Aorta (tissue), 5 donors: ENCODE measurements at regions of chr20 and their contacts with region 1.

Region 1: GRCh38 chr20:32652739-32653526 is 20.8 kb downstream of the C20orf203 start:
- DNase-seq: peak; percentile 88 to 94
- ATAC-seq: peak; percentile 95
- H3K4me3 ChIP-seq: no peak overlapping the region
- H3K27ac ChIP-seq: no peak overlapping the region
- H3K4me1 ChIP-seq: no peaks in the 10 kb centered on the region
- H3K27me3 ChIP-seq: no peaks in the 10 kb centered on the region

Region 2: DNA sequence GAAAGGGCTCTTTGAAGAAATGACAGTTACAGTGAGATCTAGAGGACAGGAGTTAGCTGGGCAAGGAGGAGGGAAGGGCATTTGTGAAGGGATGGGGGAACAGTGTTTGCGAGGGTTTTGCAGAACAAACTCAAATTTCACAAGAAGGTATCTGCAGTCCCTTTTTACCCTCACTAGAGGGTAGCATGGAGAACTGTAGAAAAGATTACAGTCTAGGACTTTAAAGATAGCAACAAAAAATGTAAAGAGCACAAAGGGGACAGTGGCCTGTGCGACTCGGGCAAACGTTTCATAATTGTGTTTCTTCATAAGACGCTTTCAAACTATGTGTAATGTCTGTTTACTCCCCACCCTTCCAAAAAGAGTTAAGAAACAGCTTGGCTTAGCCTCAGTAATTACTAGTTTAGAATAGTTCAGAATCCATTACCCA is 316.0 kb before region 1 on chr20:
- intact Hi-C with region 1: loop called in 1 of 2 experiments (anchors 5 kb)
- DNase-seq: no peak
- ATAC-seq: peak; percentile 56
- H3K4me3 ChIP-seq: no peak overlapping the region
- H3K27ac ChIP-seq: no peak overlapping the region
- H3K4me1 ChIP-seq: no peaks in the 10 kb centered on the region
- H3K27me3 ChIP-seq: no peaks in the 10 kb centered on the region

Region 3: DNA sequence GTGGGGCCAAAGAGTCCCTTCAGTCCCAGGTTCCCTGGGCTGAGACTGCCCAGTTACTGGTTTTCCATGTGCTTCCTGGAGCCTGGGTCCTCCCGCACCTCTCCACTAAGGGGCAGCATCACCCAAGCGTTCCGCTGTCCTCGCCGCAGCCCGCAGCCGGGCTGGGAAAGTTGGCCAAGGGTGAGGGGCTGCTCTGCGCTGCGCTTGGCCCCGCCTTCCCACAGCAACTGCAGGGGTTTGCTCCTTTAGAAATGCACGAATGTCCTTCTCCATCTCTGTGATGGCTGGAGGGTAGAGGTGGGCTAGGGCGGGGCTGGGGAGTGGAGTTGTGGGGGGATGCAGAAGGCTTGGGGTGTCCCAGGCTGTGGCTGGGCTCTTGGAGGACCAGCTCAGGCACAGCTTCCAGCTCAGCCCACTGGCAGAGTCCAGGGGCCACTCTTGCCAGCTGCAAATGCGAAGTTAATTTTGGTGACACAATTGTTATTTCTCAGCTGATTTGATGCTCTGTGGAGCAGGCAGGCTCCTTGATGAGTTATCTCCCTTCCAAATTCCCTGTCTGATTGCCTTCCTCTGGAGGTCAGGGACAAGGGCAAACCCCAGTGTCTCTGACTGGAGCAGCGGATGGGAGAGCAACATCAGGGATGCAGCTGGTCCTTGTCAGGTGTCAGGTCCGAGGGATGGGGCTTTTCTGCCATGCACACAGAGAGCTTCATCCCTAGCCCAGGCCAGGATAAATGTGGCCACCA is 131.0 kb before region 1 on chr20:
- intact Hi-C with region 1: loop called (anchors 1 to 2 kb)
- DNase-seq: peak; percentile 75 to 87
- ATAC-seq: peak; percentile 77
- H3K4me3 ChIP-seq: no peak overlapping the region
- H3K27ac ChIP-seq: no peak overlapping the region
- H3K4me1 ChIP-seq: no peaks in the 10 kb centered on the region
- H3K27me3 ChIP-seq: no peaks in the 10 kb centered on the region